Activated CD4-positive, alpha-beta T cell treated with anti-CD3 and anti-CD28 coated beads for 36 hours (primary cell): ENCODE measurements at regions of chr1 and their contacts with region 1.

Region 1: GRCh38 chr1:18902523-18903290 is at the start of gene ALDH4A1:
- DNase-seq: peak; percentile 96
- ATAC-seq: peak; percentile 99
- H3K4me3 Mint-ChIP-seq: peak within 1 kb of the TSS; percentile 86
- H3K27ac Mint-ChIP-seq: peak within 1 kb of the TSS; percentile 98
- H3K4me1 Mint-ChIP-seq: peaks cover 20% of the 10 kb centered on the region
- H3K27me3 Mint-ChIP-seq: no peaks in the 10 kb centered on the region
- total RNA-seq, gene ALDH4A1: 4.4 to 5.8 TPM

Region 2: DNA sequence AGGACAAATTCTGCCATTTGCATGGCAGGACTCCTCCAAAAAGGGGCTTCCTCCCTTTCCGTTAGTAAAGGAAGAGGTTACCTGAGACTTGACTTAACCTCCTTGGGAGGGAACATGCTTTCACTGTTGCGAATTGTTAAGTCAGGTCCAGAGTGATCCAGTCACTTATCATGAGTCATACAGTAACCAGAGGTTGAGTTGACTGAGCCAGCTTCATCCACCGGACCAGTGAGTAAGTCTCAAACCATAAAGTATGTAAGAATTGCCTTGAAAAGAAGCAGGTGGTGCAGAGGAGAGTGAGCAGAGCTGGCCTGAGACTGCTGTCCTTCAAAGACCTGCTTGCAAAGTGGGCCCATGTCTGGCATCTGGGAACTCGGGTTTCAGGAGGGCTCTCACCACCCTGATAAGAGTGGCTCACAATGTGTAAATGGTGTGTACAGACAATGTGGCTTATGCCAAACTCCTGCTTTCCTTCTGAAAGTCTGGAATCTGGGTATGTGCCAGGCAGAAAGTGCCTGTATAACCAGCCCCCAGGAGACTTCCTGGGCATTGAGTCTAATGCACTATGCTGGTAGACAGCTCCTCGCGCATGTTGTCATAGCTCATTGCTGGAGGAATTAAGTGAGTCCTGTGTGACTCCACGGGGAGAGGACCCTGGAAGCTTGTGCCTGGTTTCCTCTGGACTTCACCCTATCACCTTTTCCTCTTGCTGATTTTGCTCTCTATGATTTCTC is 506.3 kb before region 1 on chr1:
- CTCF ChIA-PET with region 1: no interaction called
- POLR2A ChIA-PET with region 1: no interaction called
- intact Hi-C with region 1: no loop called
- DNase-seq: no peak
- ATAC-seq: no peak
- H3K4me3 Mint-ChIP-seq: no peak overlapping the region
- H3K27ac Mint-ChIP-seq: no peak overlapping the region
- H3K4me1 Mint-ChIP-seq: no peaks in the 10 kb centered on the region
- H3K27me3 Mint-ChIP-seq: peaks cover 9% of the 10 kb centered on the region

Region 3: DNA sequence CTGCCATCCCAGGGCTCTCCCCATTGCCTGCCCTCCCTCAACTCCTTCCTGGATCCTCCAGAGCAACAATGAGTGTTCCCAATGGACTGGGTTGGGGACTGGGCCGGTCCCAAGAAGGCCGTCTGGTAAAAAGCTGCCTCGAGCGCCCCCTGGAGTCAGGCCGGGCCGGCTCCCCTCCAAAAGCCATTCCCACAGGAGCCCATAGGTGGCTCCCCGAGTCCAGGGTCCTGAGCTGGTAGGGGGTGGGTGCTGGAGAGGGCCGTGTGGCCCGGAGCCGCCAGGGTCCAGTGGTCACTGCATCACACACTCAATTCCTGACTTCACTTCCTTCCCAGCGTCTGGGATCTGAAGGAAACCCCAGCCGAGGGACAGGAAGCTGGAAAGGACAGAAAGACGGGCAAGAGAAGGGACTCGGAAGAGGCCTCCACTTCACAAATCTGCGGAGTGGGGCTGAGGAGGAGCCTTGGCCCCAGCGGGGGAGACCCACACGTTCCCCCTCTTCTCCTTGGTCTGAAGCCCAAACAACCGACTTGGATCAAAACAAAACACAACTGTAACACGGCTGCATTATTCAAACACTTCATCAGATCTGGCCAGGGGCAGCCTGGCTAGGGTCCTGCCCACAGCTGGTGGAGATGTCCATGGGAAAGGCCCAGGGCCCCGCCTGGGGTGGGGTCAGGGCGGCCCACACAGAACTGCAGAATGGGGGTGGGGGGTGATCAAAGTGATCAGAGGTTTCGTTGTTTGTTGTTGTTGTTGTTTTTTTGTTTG is 10.5 kb after region 1 on chr1:
- CTCF ChIA-PET with region 1: interaction called, 35 read pairs
- POLR2A ChIA-PET with region 1: interaction called, 3 read pairs
- intact Hi-C with region 1: no loop called
- DNase-seq: peak; percentile 87
- ATAC-seq: peak; percentile 86
- H3K4me3 Mint-ChIP-seq: no peak overlapping the region
- H3K27ac Mint-ChIP-seq: peak overlapping the region; percentile 70
- H3K4me1 Mint-ChIP-seq: peaks cover 28% of the 10 kb centered on the region
- H3K27me3 Mint-ChIP-seq: no peaks in the 10 kb centered on the region

Region 4: DNA sequence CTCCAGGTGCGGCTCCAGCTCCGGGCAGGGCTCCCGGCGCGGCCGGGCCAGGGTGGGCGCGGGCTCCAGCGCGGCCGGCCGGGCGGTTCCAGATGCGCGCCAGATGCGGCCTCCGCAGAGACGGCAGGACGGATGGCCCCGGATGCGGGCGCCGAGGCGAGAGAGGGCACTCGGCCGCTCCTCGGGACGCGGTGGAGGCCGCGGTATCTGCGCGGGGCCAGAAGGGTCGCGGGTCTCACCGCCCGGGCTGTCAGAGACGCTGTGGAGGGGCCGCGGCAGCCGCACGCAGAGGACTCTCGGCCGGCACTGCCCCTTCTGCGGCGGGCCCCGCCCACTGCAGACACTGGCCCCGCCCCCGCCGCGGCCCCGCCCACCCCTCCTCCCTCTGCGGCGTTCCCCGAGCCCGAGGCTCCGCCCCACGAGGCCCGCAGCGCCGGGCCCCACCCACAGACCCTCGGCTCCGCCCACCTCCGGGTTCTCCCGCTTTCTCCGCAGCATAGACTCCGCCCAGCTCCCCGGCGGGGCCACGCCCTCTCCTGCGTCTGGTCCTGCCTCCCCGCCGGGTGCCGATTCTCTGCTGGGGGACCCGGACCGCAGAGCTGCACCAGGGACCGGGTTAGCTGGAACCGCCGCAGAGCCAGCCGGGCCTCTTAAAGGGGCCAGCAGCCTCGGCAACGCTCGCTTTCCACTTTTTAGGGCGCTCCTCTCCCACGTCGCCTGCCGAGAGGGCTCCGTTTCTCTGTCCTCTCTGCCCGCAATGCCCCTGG is 53.8 kb after region 1 on chr1 and contains the start of gene IFFO2:
- CTCF ChIA-PET with region 1: interaction called, 28 read pairs
- POLR2A ChIA-PET with region 1: interaction called, 5 read pairs
- intact Hi-C with region 1: loop called (anchors 1 to 2 kb)
- DNase-seq: peak; percentile 99
- ATAC-seq: peak; percentile 76
- H3K4me3 Mint-ChIP-seq: peak within 1 kb of the TSS; percentile 86
- H3K27ac Mint-ChIP-seq: peak within 1 kb of the TSS; percentile 78
- H3K4me1 Mint-ChIP-seq: peaks cover 45% of the 10 kb centered on the region
- H3K27me3 Mint-ChIP-seq: peaks cover 2% of the 10 kb centered on the region
- total RNA-seq, gene IFFO2: 48.3 to 62.7 TPM

Region 5: GRCh38 chr1:19074902-19075721 is 172.4 kb after region 1 on chr1:
- CTCF ChIA-PET with region 1: interaction called, 11 read pairs
- POLR2A ChIA-PET with region 1: interaction called, 3 read pairs
- intact Hi-C with region 1: loop called (anchors 1 to 5 kb)
- DNase-seq: no peak
- ATAC-seq: peak; percentile 28
- H3K4me3 Mint-ChIP-seq: no peak overlapping the region
- H3K27ac Mint-ChIP-seq: peak overlapping the region; percentile 11
- H3K4me1 Mint-ChIP-seq: peaks cover 53% of the 10 kb centered on the region
- H3K27me3 Mint-ChIP-seq: no peaks in the 10 kb centered on the region

Region 6: GRCh38 chr1:19113697-19114092 is 211.0 kb after region 1 on chr1:
- CTCF ChIA-PET with region 1: interaction called, 9 read pairs
- POLR2A ChIA-PET with region 1: no interaction called
- intact Hi-C with region 1: loop called (anchors 5 kb)
- DNase-seq: peak; percentile 62
- ATAC-seq: peak; percentile 83
- H3K4me3 Mint-ChIP-seq: no peak overlapping the region
- H3K27ac Mint-ChIP-seq: no peak overlapping the region
- H3K4me1 Mint-ChIP-seq: no peaks in the 10 kb centered on the region
- H3K27me3 Mint-ChIP-seq: no peaks in the 10 kb centered on the region

Region 7: DNA sequence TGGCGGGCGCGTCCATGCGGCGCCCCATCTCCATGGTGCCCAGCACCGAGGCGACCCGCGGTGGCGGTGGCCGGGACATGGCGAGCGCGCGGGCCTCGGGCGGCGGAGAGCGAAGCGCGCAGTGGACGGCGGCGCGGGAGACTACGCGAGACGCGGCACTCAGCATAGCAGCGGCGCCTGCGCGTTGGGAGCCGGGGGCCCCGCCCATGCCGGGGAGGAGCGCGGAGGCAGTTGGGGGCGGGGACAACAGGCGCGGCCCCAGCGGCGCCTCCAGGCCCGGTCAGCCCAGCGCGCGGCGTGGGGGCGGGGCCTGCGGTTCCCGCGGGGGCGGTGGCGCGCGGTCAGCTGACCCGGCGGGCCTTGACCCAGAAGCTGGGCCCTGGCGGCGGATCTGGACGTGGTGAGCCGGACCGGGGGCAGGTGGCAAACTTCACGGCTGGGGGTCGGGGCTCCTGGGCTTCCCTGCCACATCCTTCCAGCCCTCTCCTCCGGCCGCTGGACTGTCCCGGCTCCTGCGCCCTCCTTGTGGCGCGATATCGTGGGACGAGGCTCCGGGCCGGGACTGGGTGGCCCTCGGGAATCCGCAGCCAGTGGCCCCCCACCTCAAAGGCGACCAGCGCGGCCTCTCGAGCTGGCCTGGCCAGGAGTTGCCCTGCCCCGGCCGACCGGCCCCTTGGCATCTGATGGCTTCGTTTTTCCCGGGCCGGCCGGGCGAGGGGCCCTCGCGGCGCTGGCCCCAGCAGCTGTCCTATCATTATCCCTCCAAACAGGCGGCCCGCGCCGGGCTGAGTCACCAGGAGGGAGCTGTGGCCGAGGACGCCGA is 409.5 kb after region 1 on chr1 and contains the starts of genes AKR7A2 and SLC66A1:
- CTCF ChIA-PET with region 1: no interaction called
- POLR2A ChIA-PET with region 1: no interaction called
- intact Hi-C with region 1: loop called in 1 of 2 experiments (anchors 1 kb)
- DNase-seq: peak; percentile 95
- ATAC-seq: peak; percentile 97
- H3K4me3 Mint-ChIP-seq: peak within 1 kb of the TSS; percentile 78
- H3K27ac Mint-ChIP-seq: peak within 1 kb of the TSS; percentile 61
- H3K4me1 Mint-ChIP-seq: peaks cover 23% of the 10 kb centered on the region
- H3K27me3 Mint-ChIP-seq: no peaks in the 10 kb centered on the region
- total RNA-seq, gene AKR7A2: 41.3 to 43.0 TPM
- total RNA-seq, gene SLC66A1: 5.9 to 6.5 TPM

Region 8: DNA sequence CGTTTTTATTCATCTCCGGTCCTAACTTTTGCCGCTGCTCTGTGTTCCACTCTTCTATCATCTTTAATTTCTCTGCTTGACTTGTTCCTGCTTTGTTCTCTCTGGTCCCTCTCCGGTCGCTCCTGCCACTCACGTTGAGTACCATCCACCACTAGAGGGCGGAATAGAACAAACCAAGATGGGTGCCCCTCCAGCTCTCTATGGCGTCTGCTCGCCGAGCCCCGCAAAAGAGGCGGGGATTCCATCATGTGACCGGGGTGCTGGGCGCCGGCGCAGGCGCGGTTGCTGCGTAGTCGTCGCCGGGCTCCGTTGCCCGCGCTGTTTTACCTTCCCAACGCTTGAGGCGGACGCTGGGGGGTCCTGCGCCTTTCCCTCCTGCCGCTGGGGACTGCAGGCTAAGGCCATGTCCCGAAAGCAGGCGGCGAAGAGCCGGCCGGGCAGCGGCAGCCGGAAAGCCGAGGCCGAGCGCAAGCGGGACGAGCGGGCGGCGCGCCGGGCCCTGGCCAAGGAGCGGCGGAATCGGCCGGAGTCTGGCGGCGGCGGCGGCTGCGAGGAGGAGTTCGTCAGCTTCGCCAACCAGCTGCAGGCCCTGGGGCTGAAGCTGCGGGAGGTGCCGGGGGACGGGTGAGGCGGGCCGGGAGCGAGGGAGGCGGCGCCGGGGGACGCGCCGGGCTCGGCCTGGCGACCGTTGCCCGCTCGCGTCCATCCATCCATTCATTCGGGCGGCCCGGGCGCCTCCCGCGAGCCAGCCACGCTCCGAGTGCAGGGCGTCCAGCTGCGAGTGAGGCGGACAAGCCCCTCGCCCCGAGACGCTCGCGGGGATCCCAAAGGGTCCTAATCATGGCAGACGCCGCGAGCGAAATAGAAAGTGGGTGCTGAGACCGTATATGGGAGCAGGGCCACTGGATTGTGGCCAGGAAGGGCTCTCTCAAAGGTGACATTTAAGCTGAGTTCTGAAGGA is 979.7 kb after region 1 on chr1 and contains the start of gene OTUD3:
- CTCF ChIA-PET with region 1: no interaction called
- POLR2A ChIA-PET with region 1: no interaction called
- intact Hi-C with region 1: loop called in 1 of 2 experiments (anchors 10 kb)
- DNase-seq: peak; percentile 96
- ATAC-seq: peak; percentile 98
- H3K4me3 Mint-ChIP-seq: peak within 1 kb of the TSS; percentile 79
- H3K27ac Mint-ChIP-seq: peak within 1 kb of the TSS; percentile 76
- H3K4me1 Mint-ChIP-seq: peaks cover 36% of the 10 kb centered on the region
- H3K27me3 Mint-ChIP-seq: peaks cover 4% of the 10 kb centered on the region
- total RNA-seq, gene OTUD3: 6.6 to 9.2 TPM